A549 (cell line): ENCODE measurements at regions of chr12 and their contacts with region 1.

Region 1: GRCh38 chr12:75526655-75527511 is 15.5 kb upstream of the KRR1 start:
- DNase-seq: peak; percentile 48 to 70
- ATAC-seq: peak; percentile 80 to 86; a peak in 5 of 6 replicates
- H3K4me3 ChIP-seq: no peak overlapping the region
- H3K27ac ChIP-seq: peak overlapping the region; percentile 51 to 69; a peak in 5 of 6 replicates
- H3K4me1 ChIP-seq: peaks cover 10% of the 10 kb centered on the region
- CTCF ChIP-seq: peak; percentile 90
- EP300 ChIP-seq: no peak
- POLR2A ChIP-seq: no peak
- RAD21 ChIP-seq: peak; percentile 93 to 95

Region 2: GRCh38 chr12:75542942-75543341 is 16.1 kb after region 1 on chr12:
- CTCF ChIA-PET with region 1: interaction called, 11 read pairs
- POLR2A ChIA-PET with region 1: no interaction called
- DNase-seq: no peak
- ATAC-seq: no peak
- H3K4me3 ChIP-seq: no peak overlapping the region
- H3K27ac ChIP-seq: no peak overlapping the region
- H3K4me1 ChIP-seq: no peaks in the 10 kb centered on the region
- CTCF ChIP-seq: no peak
- EP300 ChIP-seq: no peak
- POLR2A ChIP-seq: no peak
- RAD21 ChIP-seq: no peak

Region 3: GRCh38 chr12:75603475-75603874 is 76.6 kb after region 1 on chr12:
- CTCF ChIA-PET with region 1: no interaction called
- POLR2A ChIA-PET with region 1: no interaction called
- DNase-seq: no peak
- ATAC-seq: no peak
- H3K4me3 ChIP-seq: no peak overlapping the region
- H3K27ac ChIP-seq: no peak overlapping the region
- H3K4me1 ChIP-seq: no peaks in the 10 kb centered on the region
- CTCF ChIP-seq: no peak
- EP300 ChIP-seq: no peak
- POLR2A ChIP-seq: no peak
- RAD21 ChIP-seq: no peak

Region 4: DNA sequence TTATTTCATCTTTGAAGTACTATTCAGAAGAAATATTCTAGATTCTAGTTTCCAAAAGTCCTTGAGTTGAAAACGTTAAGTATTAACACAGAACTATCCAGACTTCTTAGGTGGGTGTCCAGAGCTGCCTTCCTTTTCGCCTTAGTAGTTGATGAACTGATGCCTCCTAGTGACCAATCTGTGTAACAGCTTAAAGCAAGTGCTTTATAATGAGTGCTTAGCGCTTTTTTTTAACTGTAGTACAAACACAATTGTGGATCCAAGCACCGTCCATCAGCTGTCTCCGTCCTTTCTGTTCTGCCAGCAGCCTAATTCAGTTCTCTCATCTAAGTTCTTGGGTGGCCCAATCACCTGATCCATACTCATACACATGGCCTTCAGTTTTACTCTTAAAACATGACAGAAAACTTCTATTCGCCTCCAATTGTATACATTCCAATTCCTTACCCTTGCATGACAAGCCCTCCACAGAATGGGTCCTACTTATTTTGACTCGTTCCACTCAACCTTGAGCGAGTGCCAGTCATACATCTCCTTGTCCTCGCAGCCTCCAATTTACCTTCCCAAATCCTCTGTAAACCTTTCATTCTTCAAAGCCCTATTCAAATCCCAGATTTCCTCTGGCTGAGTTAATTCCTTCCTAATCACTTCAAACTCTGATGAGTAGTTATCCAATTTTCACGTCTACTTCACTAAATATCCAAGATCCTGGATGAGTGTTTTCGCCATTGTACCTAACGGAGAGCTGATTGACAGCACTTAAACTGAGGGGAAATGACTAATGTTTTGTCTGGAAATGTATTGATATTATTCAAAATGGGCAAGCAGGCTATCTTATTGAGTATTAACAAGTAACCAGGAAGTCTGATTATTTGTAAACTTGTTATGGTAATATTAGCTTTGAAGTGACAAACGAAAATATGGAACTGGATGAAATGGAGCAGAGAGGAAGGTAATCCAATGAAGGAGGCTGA is 510.5 kb after region 1 on chr12:
- CTCF ChIA-PET with region 1: interaction called, 80 read pairs
- POLR2A ChIA-PET with region 1: interaction called, 29 read pairs
- DNase-seq: peak; percentile 48 to 88
- ATAC-seq: peak; percentile 44 to 64; a peak in 5 of 6 replicates
- H3K4me3 ChIP-seq: no peak overlapping the region
- H3K27ac ChIP-seq: peak overlapping the region; percentile 36 to 55; a peak in 4 of 6 replicates
- H3K4me1 ChIP-seq: peaks cover 50% of the 10 kb centered on the region
- CTCF ChIP-seq: peak; percentile 90
- EP300 ChIP-seq: no peak
- POLR2A ChIP-seq: no peak
- RAD21 ChIP-seq: peak; percentile 93 to 94